Spleen (tissue), 13 donors: ENCODE measurements at regions of chr3 and their contacts with region 1.

Region 1: DNA sequence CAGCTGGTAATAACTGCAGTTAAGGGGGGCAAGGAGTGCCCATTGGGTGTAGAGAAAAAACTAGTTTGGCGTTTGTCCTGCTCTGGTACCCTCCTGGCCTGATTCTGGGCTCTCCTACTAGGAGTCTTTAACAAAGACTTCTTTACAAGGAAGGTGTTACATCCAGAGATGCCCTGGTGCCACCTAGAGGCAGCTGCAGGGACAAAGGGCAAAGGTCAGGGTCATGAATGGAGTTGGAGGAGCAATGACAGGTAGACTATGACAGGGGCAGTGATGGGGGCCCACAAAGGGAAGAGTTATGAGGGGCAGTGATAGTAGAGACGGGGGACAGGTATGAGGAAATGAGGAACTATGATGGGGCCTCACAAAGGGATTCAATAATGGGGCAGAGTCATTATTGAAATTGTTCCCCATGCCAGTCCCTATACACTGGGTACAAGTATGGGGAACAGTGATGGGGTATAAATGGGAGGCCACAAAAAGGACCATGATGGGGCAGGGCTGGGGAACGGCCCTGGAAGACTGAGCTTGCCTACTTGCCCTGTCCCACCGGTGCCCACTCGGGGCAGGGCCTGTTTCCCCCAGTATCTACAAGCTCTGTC is 7.9 kb downstream of the CCDC71 start:
- DNase-seq: no peak
- H3K4me3 ChIP-seq: no peak overlapping the region
- H3K27ac ChIP-seq: peak overlapping the region in 1 of 8 donors; percentile 17
- H3K4me1 ChIP-seq: peaks cover 0 to 21% (median 6%) of the 10 kb centered on the region in 6 donors
- H3K27me3 ChIP-seq: no peaks in the 10 kb centered on the region
- CTCF ChIP-seq: peak in 10 of 11 experiments; percentile 15 to 66 (median 45)
- POLR2A ChIP-seq: no peak

Region 2: DNA sequence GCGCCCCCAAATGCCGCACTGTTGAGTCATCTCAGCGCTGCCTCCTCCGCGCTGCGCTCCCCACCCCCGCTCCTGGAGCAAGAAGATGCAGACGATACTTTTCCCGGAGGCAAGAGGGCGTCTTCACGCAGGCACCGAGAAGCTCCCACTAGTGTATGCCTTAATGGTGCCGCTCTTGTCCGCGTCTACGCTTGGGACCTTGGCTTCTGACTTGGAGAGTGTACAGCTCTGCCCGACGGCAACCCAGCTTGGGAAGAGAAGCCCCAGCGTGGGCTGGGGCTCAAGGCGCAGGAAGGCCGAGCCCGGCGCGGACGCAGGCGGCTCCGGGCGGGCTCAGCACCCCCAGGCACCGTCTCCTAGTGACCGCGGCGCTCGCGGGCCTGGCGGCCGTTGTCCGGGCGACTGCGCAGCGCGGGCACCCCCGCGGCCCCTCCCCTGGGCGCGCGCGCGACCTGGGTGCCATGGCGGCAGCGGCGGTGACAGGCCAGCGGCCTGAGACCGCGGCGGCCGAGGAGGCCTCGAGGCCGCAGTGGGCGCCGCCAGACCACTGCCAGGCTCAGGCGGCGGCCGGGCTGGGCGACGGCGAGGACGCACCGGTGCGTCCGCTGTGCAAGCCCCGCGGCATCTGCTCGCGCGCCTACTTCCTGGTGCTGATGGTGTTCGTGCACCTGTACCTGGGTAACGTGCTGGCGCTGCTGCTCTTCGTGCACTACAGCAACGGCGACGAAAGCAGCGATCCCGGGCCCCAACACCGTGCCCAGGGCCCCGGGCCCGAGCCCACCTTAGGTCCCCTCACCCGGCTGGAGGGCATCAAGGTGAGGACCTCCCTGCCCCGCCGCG is 168.2 kb before region 1 on chr3 and contains the start of gene P4HTM:
- intact Hi-C with region 1: loop called (anchors 5 kb)
- DNase-seq: peak; percentile 92
- H3K4me3 ChIP-seq: peak within 1 kb of the TSS; percentile 86 to 100 (median 92)
- H3K27ac ChIP-seq: peak within 1 kb of the TSS; percentile 74 to 90 (median 85)
- H3K4me1 ChIP-seq: peaks cover 18 to 54% (median 32%) of the 10 kb centered on the region in 6 donors
- H3K27me3 ChIP-seq: no peaks in the 10 kb centered on the region
- CTCF ChIP-seq: peak in 6 of 11 experiments; percentile 9 to 36 (median 25)
- POLR2A ChIP-seq: no peak
- total RNA-seq, gene P4HTM: 27.3 to 49.3 (median 32.6) TPM